Activated B cell treated with CpG ODN at 0.5 μM for 24 hours (primary cell): ENCODE measurements at regions of chr11 and their contacts with region 1.

Region 1: DNA sequence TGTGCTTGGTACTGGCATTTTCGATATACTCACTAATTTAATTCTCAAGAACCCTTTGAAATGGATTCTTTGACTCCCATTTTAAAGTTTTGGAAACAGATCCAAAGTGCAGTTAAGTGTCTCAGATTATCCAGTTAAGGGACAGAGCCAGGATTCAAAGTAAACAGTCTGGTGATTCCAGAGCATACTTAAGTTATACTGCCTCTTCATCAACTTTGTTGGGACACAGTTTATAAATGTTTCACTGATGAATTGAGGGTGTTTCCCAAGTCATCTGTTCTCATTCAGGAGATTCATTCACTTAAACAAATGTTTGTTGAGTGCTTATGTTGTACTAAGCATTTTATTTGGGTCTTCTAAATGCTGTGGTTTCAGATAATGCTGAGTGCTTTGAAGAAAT is 17.1 kb downstream of the KDM2A start:
- DNase-seq: no peak
- ATAC-seq: no peak
- H3K4me3 Mint-ChIP-seq: no peak overlapping the region
- H3K27ac Mint-ChIP-seq: no peak overlapping the region
- H3K4me1 Mint-ChIP-seq: peaks cover 11% of the 10 kb centered on the region
- H3K27me3 Mint-ChIP-seq: no peaks in the 10 kb centered on the region
- CTCF ChIP-seq: no peak

Region 2: DNA sequence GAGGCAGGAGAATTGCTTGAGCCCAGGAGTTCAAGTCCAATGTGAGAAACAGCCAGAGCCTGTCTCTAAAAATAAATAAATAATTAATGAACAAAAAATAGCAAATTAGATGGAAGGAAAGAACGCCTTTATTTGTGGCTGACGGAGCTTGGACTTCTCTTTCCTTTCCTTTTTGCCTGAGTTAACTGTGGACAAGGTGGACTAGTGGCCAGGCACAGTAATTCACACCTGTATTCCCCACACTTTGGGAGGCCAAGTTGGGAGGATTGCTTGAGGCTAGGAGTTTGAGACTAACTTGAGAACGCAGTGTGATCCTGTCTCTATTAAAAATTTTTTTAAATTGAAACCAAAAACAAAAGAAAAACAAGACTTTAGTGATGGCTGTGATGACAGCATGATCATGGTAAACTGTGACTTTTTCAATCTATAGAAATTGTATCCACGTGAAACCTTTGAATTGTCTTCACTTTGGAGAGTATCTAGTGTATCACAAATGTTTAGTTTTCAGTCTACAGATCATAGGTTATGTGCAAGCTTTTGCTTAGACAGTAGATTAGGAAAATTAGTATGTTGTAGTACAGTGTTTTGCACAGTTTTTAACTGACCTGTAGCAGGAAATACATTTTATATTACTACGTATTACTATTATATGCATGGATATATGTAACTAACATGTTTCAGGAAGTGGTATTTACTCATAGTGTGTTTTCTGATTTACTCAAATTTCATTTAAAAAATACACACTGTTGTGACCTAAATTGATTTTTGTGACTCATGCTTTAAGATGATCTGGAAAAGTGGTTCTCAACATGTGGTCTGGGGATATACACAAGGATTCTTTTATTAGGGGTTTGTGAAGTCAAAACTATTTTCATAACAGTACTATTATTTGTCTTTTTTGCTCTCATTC is 25.0 kb after region 1 on chr11:
- CTCF ChIA-PET with region 1: no interaction called
- POLR2A ChIA-PET with region 1: interaction called, 10 read pairs
- intact Hi-C with region 1: no loop called
- DNase-seq: no peak
- ATAC-seq: no peak
- H3K4me3 Mint-ChIP-seq: no peak overlapping the region
- H3K27ac Mint-ChIP-seq: peak overlapping the region; percentile 7
- H3K4me1 Mint-ChIP-seq: peaks cover 32% of the 10 kb centered on the region
- H3K27me3 Mint-ChIP-seq: no peaks in the 10 kb centered on the region
- CTCF ChIP-seq: no peak